Panc1 (cell line): ENCODE measurements at regions of chr12 and their contacts with region 1.

Region 1: DNA sequence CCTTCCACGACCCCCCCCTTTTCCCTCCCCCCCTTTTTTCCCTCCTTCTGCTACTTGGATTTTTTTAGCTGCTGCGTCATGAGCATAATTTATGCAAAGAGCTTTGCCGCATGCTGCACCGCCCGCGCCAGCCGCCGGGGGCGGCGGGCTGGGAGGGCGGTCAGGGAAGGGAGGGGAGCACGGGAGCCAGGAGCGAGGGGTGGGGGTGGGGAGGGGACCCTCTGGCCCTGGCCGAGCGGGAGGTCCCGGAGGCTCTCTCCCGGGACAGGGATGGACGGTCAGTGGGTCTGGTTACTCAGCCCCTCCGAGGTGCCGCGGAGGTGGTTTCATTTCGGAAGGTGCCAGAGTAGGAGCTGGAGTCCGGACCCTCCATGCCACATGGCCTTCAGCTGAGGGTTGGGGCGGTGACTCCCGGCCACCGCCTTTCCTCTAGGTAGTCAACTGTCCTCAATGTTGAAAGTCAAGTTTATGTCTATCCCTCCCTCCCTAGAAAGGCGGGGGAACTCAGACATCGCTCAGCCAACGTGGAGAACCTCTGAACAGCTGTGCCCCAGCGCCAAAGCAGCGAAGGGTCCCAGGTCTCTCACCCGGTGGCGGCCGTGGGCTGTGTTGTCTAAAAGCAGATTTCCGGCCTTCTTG is at the start of gene POU6F1:
- DNase-seq: peak; percentile 25
- ATAC-seq: peak; percentile 91
- H3K4me3 ChIP-seq: peak within 1 kb of the TSS; percentile 52 to 85
- H3K27ac ChIP-seq: peak within 1 kb of the TSS; percentile 85
- H3K4me1 ChIP-seq: peaks cover 14% of the 10 kb centered on the region
- H3K27me3 ChIP-seq: no peaks in the 10 kb centered on the region
- CTCF ChIP-seq: peak; percentile 58; the same call in 1 of the 2 replicates
- total RNA-seq, gene POU6F1: 3.1 TPM

Region 2: DNA sequence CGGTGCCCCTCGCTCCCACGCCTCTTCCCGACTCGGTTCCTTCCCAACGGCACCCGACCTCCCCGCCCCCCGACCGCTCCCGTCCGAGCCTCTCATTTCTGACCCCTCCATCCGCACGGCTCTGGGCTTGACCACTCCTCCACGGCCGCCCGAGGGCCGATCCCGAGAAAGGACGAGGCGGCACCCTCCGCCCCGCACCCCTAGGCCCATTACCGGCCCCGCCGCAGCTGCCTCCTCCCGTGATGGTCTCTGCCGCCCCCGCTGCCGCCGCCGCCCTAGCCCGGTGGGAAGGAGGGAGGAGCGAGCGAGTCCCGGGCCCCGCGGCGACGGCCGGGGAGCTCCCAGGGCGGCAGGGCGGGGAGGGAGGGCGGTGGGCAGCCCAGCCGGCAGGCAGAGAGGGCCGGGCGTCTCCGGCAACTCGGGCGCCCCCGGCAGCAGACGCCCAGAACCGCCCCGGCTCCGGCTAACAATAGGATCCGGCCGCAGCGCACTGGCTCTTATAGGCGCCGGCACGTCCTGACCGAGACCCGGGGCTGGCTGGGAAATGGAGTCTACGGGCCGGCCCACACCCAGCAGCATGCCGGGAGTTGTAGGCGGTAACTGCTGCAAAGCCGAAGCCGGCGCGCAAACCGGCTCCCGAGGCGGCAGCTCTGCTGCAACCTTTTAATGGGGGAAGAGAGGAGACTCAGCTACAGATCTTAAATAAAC is 134.8 kb before region 1 on chr12 and contains the start of gene CSRNP2:
- CTCF ChIA-PET with region 1: no interaction called
- POLR2A ChIA-PET with region 1: no interaction called
- in situ Hi-C with region 1: no loop called
- intact Hi-C with region 1: loop called (anchors 5 kb)
- DNase-seq: peak; percentile 51
- ATAC-seq: peak; percentile 100
- H3K4me3 ChIP-seq: peak within 1 kb of the TSS; percentile 91 to 93
- H3K27ac ChIP-seq: peak within 1 kb of the TSS; percentile 87
- H3K4me1 ChIP-seq: peaks cover 9% of the 10 kb centered on the region
- H3K27me3 ChIP-seq: no peaks in the 10 kb centered on the region
- CTCF ChIP-seq: no peak
- total RNA-seq, gene CSRNP2: 50.5 TPM

Region 3: GRCh38 chr12:51281202-51281924 is 63.3 kb after region 1 on chr12:
- CTCF ChIA-PET with region 1: interaction called, 12 read pairs
- POLR2A ChIA-PET with region 1: no interaction called
- in situ Hi-C with region 1: no loop called
- intact Hi-C with region 1: no loop called
- DNase-seq: no peak
- ATAC-seq: no peak
- H3K4me3 ChIP-seq: no peak overlapping the region
- H3K27ac ChIP-seq: no peak overlapping the region
- H3K4me1 ChIP-seq: no peaks in the 10 kb centered on the region
- H3K27me3 ChIP-seq: no peaks in the 10 kb centered on the region; the same call in 1 of the 2 replicates
- CTCF ChIP-seq: no peak

Region 4: GRCh38 chr12:51460519-51460918 is 242.4 kb after region 1 on chr12:
- CTCF ChIA-PET with region 1: no interaction called
- POLR2A ChIA-PET with region 1: no interaction called
- in situ Hi-C with region 1: no loop called
- intact Hi-C with region 1: no loop called
- DNase-seq: no peak
- ATAC-seq: no peak
- H3K4me3 ChIP-seq: no peak overlapping the region
- H3K27ac ChIP-seq: no peak overlapping the region
- H3K4me1 ChIP-seq: no peaks in the 10 kb centered on the region
- H3K27me3 ChIP-seq: no peaks in the 10 kb centered on the region
- CTCF ChIP-seq: no peak